Calu3 (cell line): ENCODE measurements at regions of chr17 and their contacts with region 1.

Region 1: DNA sequence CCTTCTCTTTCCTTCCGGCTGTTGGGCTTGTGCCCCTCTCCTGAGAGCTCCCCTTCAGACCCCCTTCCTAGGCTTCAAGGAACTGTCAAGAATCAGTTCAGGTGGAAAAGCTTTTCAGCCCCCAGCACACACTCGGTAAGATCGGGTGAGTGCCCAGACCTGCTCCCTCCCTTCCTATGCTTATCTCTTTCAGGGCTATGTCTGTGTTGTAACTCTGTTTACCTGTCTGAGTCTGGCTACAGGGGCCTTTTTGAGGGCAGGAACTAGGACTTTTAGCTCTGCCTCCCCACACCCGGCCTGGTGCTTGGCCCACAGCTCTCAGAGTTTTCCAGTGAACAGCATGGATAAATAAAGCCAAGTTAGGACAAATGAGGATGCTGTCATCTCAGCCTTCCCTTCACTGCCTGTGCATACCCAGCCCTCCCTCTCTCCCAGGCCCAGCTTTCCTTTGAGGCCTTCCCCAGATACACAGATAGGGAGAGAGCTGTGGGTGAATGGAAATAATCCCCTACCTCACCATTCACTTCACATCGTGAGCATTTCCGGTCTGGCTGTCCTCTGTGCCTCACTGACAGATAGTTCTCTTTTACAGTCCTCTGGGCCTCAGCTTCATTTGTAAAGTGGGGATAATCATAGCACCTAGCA is 5.7 kb upstream of the MRPS23 start:
- DNase-seq: no peak
- H3K4me3 Mint-ChIP-seq: no peak overlapping the region
- H3K27ac Mint-ChIP-seq: no peak overlapping the region
- H3K4me1 Mint-ChIP-seq: peaks cover 11% of the 10 kb centered on the region
- H3K27me3 Mint-ChIP-seq: no peaks in the 10 kb centered on the region
- CTCF ChIP-seq: no peak

Region 2: DNA sequence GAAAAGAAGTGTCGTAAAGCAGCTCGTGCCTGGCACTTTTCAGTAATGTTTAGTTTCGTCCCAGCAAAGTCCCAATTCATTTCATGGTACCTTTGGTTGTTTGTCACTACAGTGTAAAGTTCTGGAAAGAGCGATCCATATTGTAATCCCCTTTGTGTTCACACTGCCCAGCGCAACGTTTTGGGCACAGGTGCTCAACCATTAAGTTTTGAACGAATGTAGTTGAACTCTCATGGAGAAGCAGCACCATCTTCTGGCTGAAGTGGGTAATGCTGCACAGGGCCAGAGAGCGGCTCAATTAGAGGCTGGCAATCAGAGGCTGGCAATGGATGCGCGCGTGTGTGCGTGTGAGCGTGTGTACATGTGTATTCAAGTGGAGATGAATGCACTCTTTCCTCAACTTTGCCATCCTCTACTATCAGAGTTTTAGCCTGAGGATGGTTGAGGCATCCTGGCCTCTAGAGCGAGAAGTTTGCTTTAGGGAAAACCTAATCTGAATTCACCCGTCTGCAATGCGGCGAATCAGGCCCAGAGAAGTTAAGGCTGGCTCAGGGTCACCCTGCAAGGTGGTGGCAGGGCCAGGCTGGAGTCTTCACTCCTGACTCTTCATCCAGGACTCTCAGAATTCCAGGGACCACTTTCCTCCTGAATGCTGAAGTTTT is 257.6 kb after region 1 on chr17:
- CTCF ChIA-PET with region 1: interaction called, 3 read pairs
- intact Hi-C with region 1: loop called (anchors 5 kb)
- DNase-seq: peak; percentile 74
- H3K4me3 Mint-ChIP-seq: no peak overlapping the region
- H3K27ac Mint-ChIP-seq: no peak overlapping the region
- H3K4me1 Mint-ChIP-seq: no peaks in the 10 kb centered on the region
- H3K27me3 Mint-ChIP-seq: peaks cover 51% of the 10 kb centered on the region
- CTCF ChIP-seq: peak; percentile 78